GM10248 (cell line): ENCODE measurements at regions of chr15 and their contacts with region 1.

Region 1: DNA sequence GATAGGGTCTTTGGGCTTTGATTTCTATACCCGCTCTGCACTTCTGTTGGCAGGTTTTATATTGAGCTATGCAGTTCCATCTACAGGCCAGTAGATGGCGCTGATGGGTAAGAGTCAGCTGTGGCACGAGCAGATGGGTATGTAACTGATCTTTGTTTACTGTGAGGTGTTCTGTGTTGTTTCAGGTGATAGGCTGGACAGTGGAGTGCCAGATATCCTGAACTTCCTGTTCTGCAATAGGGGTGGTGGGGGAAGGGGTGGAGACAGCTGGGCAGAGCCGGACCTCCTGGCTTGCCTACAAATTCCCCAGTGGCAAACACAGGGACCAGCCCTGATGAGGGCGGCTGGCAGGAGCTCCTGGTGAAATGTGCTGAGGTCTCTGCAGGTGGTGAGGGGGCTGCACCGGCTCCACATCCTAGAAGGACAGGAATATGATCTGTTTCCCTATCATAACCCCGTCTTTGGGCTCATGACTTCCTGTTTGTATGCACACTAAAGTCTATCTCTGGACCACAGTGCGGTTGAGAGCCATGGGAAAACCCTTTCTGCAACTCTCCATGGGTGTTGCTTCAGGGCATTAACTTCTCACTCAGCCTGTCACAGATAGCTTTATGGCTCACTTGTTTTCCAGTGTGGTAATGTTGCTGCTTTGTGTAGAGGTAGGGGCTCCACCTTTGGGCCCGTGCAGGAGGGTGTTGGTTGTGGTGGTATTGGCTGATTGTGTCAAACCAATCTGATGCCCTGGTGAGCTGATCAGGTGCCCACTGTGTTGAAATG is 13.4 kb upstream of the FAM98B start:
- DNase-seq: peak; percentile 55
- CTCF ChIP-seq: peak; percentile 92

Region 2: DNA sequence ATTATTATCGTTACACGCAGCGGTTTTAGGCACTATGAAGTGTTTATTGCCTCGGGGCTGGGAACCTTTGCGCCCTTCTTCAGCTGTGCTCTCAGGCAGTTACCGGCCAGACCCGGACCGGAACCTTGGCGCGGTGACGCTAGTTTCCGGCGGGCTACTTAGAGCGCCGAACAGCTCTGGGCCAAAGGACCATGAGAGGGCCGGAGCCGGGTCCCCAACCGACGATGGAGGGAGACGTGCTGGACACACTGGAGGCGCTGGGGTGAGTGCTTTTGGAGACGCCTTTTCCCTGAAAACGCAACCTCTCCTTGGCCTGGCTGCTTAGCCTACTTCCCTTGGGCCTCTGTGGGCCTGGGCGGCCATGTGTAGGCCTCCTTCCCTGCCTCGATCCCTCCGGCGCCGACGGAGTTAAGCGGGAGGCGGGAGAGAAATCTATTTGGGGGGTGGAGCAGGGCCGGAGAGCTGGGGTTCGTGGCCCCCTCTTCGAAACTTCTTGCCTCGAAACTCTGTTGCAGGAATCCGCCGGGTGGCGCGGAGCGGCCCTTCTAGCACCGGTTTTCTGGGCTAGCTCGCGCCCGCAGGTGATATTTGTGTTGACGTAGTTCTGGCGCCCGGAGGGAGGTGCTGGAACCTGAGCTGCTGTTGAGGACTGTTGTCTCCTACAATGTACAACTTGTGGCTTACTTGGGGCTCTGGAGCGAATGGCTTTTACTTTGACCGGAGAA is 13.6 kb after region 1 on chr15 and contains the start of gene FAM98B:
- CTCF ChIA-PET with region 1: interaction called, 59 read pairs
- POLR2A ChIA-PET with region 1: no interaction called
- DNase-seq: peak; percentile 84
- CTCF ChIP-seq: no peak

Region 3: DNA sequence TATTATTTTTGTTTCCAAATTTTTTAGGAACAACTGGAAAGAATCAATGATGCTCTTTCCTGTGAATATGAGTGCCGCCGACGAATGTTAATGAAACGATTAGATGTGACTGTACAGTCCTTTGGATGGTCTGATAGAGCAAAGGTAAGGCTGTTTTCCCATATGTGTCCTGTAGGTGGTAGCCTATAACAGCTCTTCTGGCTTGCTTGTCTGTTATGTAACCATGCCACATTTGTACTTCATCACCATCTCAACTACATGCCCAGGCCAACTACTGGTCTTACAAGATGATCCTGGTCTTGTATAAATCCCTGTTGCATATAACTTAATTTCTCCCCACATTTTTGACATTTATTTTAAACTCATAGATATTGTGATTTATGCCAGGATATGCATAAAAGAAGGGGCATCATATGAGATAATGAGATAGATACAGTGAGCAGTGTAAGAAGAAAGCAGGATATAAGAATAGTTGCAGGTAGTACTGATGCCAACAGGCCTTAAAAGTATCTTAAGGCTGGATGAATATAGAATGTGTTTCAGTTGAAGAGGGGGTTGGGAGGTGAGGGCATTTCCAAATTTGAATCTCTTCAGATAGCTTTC is 33.7 kb after region 1 on chr15:
- CTCF ChIA-PET with region 1: interaction called, 16 read pairs
- POLR2A ChIA-PET with region 1: no interaction called
- DNase-seq: peak; percentile 49
- CTCF ChIP-seq: peak; percentile 54

Region 4: DNA sequence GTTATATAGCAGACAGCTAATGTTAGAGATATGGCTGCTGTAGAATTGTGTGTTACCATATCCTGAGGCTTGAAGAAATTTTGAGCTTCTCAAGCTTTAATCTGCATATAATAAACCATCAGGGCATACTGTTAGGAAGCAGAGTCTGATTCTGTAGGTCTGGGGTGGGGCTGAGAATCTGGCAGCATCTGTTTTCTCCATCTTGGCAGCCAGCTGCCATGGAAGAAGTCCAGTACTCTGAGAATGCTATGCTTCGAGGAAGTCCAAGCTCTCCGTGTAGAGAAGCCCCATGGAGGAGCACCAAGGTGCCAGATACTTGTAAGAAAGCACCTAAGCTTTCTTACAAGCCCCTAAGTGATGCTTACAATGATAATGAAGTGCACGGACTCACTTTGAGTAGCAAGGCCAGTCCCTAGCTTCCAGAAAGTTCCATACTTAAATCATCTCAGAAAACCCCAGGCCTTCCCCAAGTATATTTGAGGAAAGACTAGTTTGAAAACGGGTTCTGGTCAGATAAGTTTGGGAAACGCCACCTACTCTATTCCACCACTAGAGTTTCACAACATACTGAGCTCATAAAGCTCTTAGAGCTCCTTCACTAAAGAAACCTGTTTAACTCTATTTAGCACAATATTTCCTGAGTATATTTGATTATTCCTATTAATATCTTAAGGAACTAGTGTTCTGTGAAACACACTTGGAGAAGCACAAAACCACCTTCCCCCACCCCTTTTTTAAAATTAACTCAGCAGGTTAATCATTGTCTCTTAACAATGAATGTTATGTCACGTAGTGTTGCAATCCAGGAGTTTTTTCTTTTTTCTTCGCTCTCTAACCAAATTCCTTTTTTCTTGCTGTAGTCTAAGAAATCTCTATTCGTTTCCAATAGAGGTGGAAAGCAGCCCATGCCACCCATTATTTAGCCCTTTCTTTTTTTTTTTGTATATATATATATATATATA is 184.0 kb after region 1 on chr15:
- CTCF ChIA-PET with region 1: interaction called, 12 read pairs
- POLR2A ChIA-PET with region 1: no interaction called
- DNase-seq: no peak
- CTCF ChIP-seq: no peak

Region 5: DNA sequence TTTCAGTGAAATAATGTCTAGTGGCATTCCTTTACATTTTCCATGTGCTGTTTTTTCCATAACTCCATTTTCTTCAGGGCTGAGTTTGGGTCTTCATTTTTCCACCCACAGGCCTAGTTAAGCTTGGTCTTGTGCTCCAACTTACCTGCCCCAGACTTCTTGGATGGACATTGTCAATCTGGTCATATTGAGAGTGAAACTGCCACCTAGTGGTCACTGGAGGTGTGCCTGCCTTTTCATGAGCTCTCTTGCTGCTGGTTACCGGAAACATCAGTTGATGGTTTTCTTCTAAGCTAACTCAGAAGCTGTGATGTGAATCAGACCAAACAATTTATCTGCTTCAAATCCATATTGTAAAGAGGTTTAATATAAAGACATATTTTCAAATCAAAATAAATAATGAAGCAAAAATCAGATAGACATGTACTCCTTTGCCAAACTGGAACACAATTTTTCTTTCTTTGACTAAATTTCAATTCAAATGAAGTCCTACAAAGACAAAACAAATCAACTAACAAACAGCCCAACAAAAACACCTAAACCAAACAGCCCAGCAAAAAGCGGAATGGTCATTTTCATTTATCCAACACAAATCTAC is 259.2 kb after region 1 on chr15:
- CTCF ChIA-PET with region 1: interaction called, 156 read pairs
- POLR2A ChIA-PET with region 1: no interaction called
- DNase-seq: peak; percentile 60
- CTCF ChIP-seq: peak; percentile 93